Activated T-helper 1 cell treated with anti-CD3 and anti-CD28 coated beads, Interleukin-12 subunit alpha, Interleukin-12 subunit beta, Interleukin-2, Interleukin-4 antibody, amounts not matched to agents 30 ng/mL and 10 ng/mL and 1 ng/mL, durations not matched to agents 14 hours and 24 hours and 36 hours (primary cell): ENCODE measurements at regions of chr16 and their contacts with region 1.

Region 1: GRCh38 chr16:56191156-56191815 is at the start of gene GNAO1:
- DNase-seq: peak; percentile 37
- H3K4me3 Mint-ChIP-seq: peak within 1 kb of the TSS; percentile 72
- H3K27ac Mint-ChIP-seq: peak within 1 kb of the TSS; percentile 44
- H3K4me1 Mint-ChIP-seq: peaks cover 31% of the 10 kb centered on the region
- H3K27me3 Mint-ChIP-seq: peaks cover 78% of the 10 kb centered on the region
- total RNA-seq, gene GNAO1: 1.7 and 2.0 TPM in 2 replicates

Region 2: GRCh38 chr16:54936979-54937670 is 1254.2 kb before region 1 on chr16:
- intact Hi-C with region 1: loop called (anchors 5 kb)
- DNase-seq: no peak
- H3K4me3 Mint-ChIP-seq: no peak overlapping the region
- H3K27ac Mint-ChIP-seq: peak overlapping the region; percentile 75
- H3K4me1 Mint-ChIP-seq: no peaks in the 10 kb centered on the region
- H3K27me3 Mint-ChIP-seq: peaks cover 79% of the 10 kb centered on the region

Region 3: GRCh38 chr16:55478827-55479429 is 712.4 kb before region 1 on chr16 and contains the start of gene MMP2:
- intact Hi-C with region 1: loop called (anchors 10 kb)
- DNase-seq: no peak
- H3K4me3 Mint-ChIP-seq: peak within 1 kb of the TSS; percentile 43
- H3K27ac Mint-ChIP-seq: no peak within 1 kb of the TSS
- H3K4me1 Mint-ChIP-seq: peaks cover 10% of the 10 kb centered on the region
- H3K27me3 Mint-ChIP-seq: peaks cover 29% of the 10 kb centered on the region
- total RNA-seq, gene MMP2: not detected in 2 replicates

Region 4: DNA sequence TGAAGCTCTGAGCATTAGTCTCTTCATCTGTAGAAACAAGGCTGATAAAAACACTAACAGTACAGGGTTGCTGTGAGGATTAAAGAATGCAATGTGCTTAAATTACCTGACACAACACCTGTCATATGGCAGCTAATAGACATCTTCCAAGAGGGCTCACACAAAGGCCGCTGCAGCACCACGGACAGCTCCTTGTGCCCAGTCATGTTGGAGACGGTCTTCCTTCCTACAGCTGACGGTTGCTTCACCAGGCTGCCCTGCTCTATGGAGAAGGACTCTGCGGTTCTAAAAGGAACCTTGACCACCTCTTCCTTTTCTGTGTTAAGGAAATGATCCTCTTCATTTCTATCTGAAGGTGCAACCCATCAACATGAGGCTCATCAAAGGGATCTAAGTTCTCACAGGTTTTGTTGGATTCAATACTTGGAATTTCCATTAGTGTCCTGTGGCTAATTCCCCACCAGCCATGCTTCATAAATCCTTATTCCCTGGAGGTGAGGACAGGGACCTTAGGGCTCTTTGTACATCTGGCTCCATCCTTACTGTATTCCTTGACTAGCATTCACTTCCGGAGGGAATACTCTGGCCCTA is 177.2 kb before region 1 on chr16:
- intact Hi-C with region 1: loop called (anchors 1 kb)
- DNase-seq: peak; percentile 7
- H3K4me3 Mint-ChIP-seq: no peak overlapping the region
- H3K27ac Mint-ChIP-seq: no peak overlapping the region
- H3K4me1 Mint-ChIP-seq: no peaks in the 10 kb centered on the region
- H3K27me3 Mint-ChIP-seq: peaks cover 3% of the 10 kb centered on the region